GM18951 (cell line): ENCODE measurements at regions of chr11 and their contacts with region 1.

Region 1: GRCh38 chr11:128831174-128832120 is 35.6 kb downstream of the KCNJ1 start:
- POLR2A ChIP-seq: no peak

Region 2: GRCh38 chr11:128290106-128290840 is 541.2 kb before region 1 on chr11:
- in situ Hi-C with region 1: loop called (anchors 25 kb)
- POLR2A ChIP-seq: peak; percentile 45

Region 3: DNA sequence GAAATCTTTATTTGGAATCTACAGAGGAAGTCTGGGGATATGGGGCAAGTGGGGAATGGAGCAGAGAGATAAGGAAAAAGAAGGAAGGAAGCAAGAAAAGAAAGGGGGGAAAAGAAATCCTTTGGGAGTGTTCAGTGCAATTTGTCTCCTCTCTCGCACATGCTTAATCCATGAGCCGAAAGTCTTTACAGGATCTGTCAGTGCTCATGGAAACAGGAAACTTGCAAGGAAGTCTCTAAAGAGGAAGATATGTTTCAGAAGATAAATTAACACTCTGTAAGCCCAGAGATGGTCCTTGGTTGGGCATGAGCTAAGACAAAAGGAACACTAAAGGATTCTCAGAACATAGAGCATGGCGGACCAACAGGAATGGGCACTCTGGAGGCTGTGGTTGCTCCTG is 185.5 kb before region 1 on chr11:
- in situ Hi-C with region 1: no loop called
- POLR2A ChIP-seq: no peak

Region 4: GRCh38 chr11:129056873-129057272 is 225.4 kb after region 1 on chr11:
- in situ Hi-C with region 1: no loop called
- POLR2A ChIP-seq: no peak